Heart right ventricle (tissue), 16 donors: ENCODE measurements at regions of chr12 and their contacts with region 1.

Region 1: GRCh38 chr12:47715393-47715876 is 9.6 kb upstream of the RPAP3 start:
- DNase-seq: peak; percentile 61 to 86
- ATAC-seq: peak; percentile 22 to 66 (median 56)
- H3K4me3 ChIP-seq: peak overlapping the region in 1 of 10 donors; percentile 8
- H3K27ac ChIP-seq: peak overlapping the region in 9 of 10 donors; percentile 24 to 97 (median 93)
- H3K4me1 ChIP-seq: peaks cover 31 to 49% (median 47%) of the 10 kb centered on the region in 9 donors
- H3K27me3 ChIP-seq: no peaks in the 10 kb centered on the region
- CTCF ChIP-seq: peak; percentile 72 to 90 (median 83)

Region 2: DNA sequence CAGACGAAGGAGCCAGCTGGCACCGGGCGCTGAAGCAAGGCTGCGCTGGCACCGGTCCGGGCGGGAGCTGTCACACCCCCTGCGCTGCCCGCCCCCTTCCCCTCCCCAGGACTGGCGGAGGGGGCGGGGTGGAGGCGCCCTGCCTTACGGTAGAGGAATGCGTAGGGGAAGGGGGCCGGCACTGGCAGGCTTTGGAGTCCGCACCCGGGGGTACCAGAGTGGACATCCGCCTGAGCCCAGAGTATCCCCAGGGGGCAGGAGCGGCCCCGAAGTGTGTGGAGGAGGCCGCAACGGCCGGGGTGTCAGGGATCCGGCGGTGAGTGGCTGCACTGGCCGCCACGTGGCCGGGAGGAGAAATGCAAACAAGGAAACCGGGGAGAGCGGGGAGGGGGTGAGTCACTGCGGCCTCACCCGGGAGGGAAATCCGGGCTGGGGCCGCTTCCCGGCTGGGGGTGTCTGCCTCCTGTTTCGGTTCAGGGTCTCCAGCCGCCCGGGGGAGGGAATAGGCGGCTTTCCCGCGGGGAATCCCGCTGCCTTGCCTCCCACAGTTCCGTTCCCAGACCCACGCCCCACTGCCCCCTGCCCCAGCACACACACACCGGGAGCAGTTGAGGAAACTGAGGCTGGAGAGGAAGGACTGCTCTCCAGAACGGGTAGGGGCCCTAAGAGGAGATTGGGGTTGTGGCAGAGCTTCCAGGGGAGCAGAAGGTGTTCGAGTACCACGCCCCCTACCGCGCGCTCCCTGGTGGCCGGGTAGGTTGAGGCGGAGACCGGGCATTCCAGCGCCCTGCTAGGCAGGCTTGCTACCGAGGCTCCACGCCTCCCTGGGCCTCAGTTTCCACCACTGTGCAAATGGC is 43.6 kb after region 1 on chr12 and contains the start of gene RAPGEF3:
- intact Hi-C with region 1: loop called in 3 of 10 experiments (anchors 2 kb)
- DNase-seq: peak; percentile 89
- ATAC-seq: peak; percentile 87 to 92 (median 88)
- H3K4me3 ChIP-seq: peak within 1 kb of the TSS; percentile 34 to 78 (median 59)
- H3K27ac ChIP-seq: peak within 1 kb of the TSS; percentile 72 to 91 (median 86)
- H3K4me1 ChIP-seq: peaks cover 16 to 78% (median 58%) of the 10 kb centered on the region in 9 donors
- H3K27me3 ChIP-seq: no peaks in the 10 kb centered on the region
- CTCF ChIP-seq: peak; percentile 28 to 65 (median 50)
- total RNA-seq, gene RAPGEF3: 9.5 to 54.9 (median 19.8) TPM

Region 3: DNA sequence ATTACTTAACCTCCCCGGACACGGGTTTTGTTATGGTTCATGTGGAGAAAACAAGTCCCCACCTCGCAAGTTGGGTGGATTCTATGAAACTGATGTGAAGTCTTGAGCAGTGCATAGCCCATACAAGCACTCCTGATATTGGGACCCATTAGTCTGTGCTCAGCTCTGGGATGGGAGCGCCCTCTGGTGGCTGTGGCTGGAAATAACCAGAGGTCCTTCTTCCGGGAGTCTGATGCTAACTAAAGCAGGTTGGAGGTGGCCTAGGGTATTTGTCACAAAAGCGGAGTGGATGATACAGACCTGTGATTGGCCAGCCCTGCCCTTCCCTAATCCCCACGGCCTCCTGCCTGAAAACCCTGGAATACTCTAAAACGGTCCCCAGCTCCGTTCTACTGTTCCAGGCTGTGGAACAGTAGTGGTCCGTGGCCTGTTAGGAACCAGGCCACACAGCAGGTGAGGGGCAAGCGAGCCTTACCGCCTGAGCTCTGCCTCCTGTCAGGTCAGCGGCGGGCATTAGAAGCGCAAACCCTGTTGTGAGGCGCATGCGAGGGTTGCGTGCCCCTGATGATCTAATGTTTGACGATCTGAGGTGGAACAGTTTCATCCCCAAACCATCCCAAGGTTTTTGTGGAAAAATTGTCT is 64.0 kb after region 1 on chr12:
- intact Hi-C with region 1: loop called in 8 of 10 experiments (anchors 1 to 5 kb)
- DNase-seq: peak; percentile 88 to 91
- ATAC-seq: peak; percentile 68 to 84 (median 76)
- H3K4me3 ChIP-seq: no peak overlapping the region
- H3K27ac ChIP-seq: peak overlapping the region in 2 of 10 donors; percentile 39 to 52
- H3K4me1 ChIP-seq: peaks cover 22 to 71% (median 52%) of the 10 kb centered on the region in 9 donors
- H3K27me3 ChIP-seq: no peaks in the 10 kb centered on the region
- CTCF ChIP-seq: peak; percentile 90 to 97 (median 95)

Region 4: DNA sequence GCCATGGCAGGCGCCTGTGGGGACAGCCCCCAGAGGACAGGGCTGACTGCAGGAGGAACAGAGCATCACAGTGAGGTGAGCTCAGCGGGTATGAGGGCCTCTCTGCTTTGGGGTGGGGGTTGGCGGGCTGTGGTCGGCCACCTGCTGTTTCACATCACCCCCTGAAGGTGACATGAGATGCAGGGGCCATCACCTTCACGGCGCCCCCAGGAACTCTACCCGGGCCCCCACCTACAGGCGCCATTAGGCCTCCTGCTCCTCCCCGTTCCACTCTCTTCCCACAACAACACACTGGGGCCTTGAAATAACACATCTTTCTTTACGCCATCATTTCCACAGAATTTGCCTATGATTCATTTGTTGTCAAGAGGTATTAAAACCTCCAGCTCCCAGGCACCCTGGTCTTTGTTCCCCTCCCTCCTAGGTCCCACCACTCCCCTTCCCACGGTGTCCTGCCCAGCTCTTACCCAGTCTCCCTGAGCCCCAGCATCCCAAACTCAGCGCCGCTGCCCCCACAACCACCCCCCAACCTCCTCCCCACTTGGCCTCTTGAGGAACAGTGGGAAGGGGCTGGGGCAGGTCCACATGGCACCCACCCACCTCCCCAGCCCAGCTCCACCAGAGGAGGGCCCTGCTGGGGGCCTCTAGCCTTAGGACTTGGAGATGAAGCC is 117.0 kb after region 1 on chr12:
- intact Hi-C with region 1: loop called in 3 of 10 experiments (anchors 1 to 5 kb)
- DNase-seq: no peak
- ATAC-seq: no peak
- H3K4me3 ChIP-seq: no peak overlapping the region
- H3K27ac ChIP-seq: peak overlapping the region in 1 of 10 donors; percentile 47
- H3K4me1 ChIP-seq: peaks cover 21 to 59% (median 41%) of the 10 kb centered on the region in 9 donors
- H3K27me3 ChIP-seq: no peaks in the 10 kb centered on the region
- CTCF ChIP-seq: no peak

Region 5: GRCh38 chr12:47896633-47897032 is 181.2 kb after region 1 on chr12:
- intact Hi-C with region 1: no loop called
- DNase-seq: no peak
- ATAC-seq: no peak
- H3K4me3 ChIP-seq: no peak overlapping the region
- H3K27ac ChIP-seq: no peak overlapping the region
- H3K4me1 ChIP-seq: peaks cover 0 to 55% (median 0%) of the 10 kb centered on the region in 9 donors
- H3K27me3 ChIP-seq: peaks cover 0 to 24% (median 8%) of the 10 kb centered on the region in 7 donors
- CTCF ChIP-seq: no peak

Region 6: DNA sequence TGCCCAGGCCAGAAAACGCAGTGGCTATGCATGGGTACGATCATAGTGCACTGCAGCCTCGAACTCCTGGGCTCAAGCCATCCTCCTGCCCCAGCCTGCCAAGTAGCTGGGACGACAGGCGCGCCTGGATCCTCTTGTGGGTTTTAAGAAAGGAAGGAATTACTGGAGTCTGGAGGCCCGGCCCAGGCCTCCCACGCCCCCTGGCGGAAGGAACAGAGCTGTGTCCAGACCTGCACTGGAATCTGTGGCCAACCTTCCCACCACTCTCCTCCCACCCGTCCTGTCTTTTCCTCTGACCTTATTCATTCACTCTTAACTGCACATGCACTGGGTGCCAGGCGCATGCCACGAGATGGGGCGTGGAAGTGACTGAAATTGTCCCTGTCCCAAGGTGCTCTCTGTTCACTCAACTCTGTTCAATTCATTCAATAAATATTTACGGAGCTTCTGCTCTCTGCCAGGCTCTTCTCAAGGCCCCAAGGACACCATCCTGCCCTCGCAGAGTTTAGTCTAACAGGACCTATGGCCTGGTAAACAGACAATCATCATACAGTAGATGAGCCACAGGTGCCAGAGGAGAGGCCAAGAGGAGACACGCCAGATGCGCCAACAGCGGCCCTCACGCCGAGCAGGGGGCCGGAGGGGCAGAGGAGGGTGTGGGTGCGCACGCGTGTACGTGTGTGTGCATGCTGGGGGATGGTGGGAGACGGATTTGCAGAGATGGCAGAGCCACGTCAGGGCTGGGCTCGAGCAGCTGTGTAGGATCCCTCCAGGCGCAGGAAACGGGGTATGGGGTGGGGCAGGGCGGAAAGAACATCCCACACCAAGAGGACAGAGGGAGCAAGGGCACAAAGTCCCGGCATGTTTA is 234.2 kb after region 1 on chr12:
- intact Hi-C with region 1: loop called in 3 of 10 experiments (anchors 10 kb)
- DNase-seq: peak; percentile 63 to 79
- ATAC-seq: peak; percentile 80 to 93 (median 88)
- H3K4me3 ChIP-seq: no peak overlapping the region
- H3K27ac ChIP-seq: no peak overlapping the region
- H3K4me1 ChIP-seq: peaks cover 0 to 14% (median 4%) of the 10 kb centered on the region in 9 donors
- H3K27me3 ChIP-seq: peaks cover 0 to 4% (median 0%) of the 10 kb centered on the region in 7 donors
- CTCF ChIP-seq: peak; percentile 74 to 90 (median 86)